WTC11 (cell line): ENCODE measurements at regions of chr3 and their contacts with region 1.

Region 1: DNA sequence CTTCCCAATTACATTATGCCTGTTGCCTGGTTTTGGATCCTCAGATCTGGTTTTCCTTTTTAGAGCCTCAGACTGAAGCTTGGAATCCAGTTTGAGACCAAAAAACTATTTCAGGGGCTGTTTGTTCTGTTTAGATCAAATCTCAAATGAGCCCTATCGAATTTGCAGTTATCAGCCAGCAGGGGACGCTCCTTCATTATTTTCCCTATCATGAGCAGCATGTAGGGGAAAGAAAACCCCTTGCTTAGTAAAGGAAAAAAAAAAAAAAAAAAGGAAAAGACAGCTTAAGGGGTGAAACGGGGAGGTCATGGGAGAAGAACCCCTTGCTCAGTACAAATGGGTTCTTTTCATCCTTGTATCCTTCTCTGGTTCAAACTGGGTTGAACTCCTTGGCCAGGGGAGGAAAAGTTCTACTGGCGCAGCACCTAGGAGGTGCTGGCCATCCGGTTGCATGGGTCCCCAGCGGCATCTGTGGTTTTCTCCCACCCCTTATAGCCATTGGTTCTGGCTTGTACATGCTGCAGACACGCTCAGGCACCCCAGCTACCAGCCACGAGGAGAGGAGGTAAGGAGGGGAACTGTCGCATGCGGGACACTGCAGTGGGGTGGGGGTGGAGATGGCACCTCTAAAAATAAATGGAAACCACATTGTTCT is 1375.1 kb upstream of the ALCAM start:
- DNase-seq: peak; percentile 50
- ATAC-seq: peak; percentile 86
- H3K4me3 Mint-ChIP-seq: no peak overlapping the region
- H3K27ac Mint-ChIP-seq: no peak overlapping the region
- H3K4me1 Mint-ChIP-seq: peaks cover 4% of the 10 kb centered on the region; the same call in 1 of the 2 replicates
- H3K27me3 Mint-ChIP-seq: no peaks in the 10 kb centered on the region
- CTCF ChIP-seq: peak; percentile 71

Region 2: GRCh38 chr3:104004956-104005355 is 13.4 kb after region 1 on chr3:
- CTCF ChIA-PET with region 1: interaction called, 13 read pairs
- POLR2A ChIA-PET with region 1: no interaction called
- DNase-seq: no peak
- ATAC-seq: no peak
- H3K4me3 Mint-ChIP-seq: no peak overlapping the region
- H3K27ac Mint-ChIP-seq: no peak overlapping the region
- H3K4me1 Mint-ChIP-seq: no peaks in the 10 kb centered on the region
- H3K27me3 Mint-ChIP-seq: no peaks in the 10 kb centered on the region
- CTCF ChIP-seq: no peak